Right ventricle myocardium superior (tissue), 1 donor: ENCODE measurements at regions of chr1 and their contacts with region 1.

Region 1: DNA sequence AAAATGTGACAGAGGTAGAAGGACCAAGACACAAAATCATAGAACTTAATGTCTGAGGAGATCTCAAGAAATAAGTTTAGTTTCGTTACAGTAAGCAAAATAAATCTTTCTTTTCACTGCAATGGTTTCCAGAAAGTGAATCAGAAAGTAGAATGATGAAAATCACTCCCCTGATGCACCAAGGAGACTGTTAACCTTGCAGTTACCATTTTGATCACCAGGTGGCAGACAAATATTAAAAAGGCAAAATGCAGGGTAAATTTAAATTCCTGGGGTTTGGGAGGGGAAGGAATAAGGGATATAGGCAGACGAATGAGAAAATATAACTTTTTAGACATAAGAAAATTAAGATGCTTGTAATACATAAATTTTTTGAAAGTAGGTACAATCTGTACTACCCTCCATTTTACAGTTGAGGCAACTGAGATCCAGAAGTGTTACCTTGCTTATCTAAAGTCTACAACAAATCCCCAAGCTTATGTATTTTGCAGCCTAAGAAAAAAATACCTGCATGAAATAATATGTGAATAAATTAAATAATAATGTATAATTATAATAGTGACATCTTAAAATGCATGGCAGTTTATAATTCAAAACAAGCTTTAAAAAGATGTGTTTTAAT is 253.2 kb downstream of the CRB1 start:
- DNase-seq: no peak
- ATAC-seq: no peak

Region 2: DNA sequence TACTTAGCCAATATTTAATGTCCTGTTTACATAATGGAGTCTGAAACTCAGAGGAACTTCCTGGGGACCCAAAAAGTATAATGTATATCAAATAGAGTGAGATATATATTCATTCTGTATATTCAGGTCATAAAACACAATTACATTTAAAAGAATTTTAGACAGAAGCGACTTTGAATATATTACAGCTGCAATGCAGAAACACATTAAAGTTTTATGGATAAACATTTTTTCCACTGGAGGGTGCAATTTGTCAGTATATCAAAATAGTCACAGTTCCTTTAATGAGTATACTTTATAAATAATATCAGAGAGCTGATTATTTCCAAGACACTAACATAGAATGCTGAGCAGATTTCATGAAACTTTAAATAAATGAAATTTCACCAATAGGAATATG is 297.1 kb before region 1 on chr1:
- intact Hi-C with region 1: no loop called
- DNase-seq: no peak
- ATAC-seq: no peak

Region 3: DNA sequence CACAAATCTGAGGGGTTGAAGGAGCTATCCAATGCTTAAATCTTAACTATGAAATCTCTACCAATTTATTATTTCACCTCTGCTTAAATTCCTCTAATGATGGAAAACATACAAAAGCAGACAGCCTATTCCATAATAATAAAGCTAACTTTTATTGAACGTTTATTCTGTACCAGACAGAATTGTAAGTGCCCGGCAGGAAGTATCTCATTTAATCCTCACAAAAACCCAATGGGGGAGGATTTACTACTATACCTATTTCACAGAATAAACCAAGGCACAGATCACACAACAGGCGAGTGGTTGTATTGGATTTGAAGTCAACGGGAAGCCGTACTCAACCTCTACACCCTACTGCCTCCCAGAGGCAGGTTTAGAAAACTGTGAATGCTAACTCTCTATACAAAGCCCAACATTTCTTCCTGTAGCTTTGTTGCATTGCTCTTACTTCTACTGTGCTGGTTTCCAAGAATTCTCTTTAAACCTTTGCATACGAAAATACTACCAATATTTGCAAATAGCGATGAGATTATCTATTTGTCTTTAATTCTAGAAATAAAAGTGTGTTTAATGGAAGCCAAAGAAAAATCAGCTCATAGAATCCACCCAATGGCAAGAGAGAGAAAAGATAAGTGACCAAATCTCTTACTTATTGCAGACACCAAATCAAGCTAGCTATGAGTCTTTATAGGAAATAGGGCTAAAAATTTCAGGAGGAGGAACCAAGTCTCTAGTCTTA is 347.7 kb after region 1 on chr1:
- intact Hi-C with region 1: loop called (anchors 10 kb)
- DNase-seq: no peak
- ATAC-seq: peak; percentile 81

Region 4: GRCh38 chr1:197924516-197925123 is 403.4 kb after region 1 on chr1:
- intact Hi-C with region 1: loop called (anchors 10 kb)
- DNase-seq: no peak
- ATAC-seq: peak; percentile 61